Mammary epithelial cell (primary cell): ENCODE measurements at regions of chr3 and their contacts with region 1.

Region 1: DNA sequence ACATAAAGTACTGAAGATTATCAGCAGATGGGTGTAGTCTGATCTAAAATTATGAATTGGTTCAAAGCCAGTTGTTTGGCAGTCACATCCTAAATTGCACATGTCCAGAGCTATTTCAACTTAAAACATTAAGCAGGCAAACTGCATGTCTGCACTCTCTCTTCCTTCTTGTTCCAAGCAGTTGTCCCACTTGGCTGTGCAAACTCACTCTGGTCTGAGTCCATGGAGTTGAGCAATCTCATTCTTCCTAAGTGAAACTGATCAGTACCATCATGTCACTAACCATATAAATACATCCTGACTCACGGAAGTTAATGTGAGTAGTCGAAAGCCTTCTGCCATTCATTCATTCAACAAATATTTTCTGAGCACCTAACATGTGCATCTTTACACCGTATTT is 353.0 kb downstream of the ROBO1 start:
- DNase-seq: peak; percentile 41
- H3K4me3 ChIP-seq: no peak overlapping the region
- H3K27ac ChIP-seq: no peak overlapping the region
- H3K4me1 ChIP-seq: no peaks in the 10 kb centered on the region
- H3K27me3 ChIP-seq: no peaks in the 10 kb centered on the region
- CTCF ChIP-seq: no peak

Region 2: GRCh38 chr3:79490165-79491028 is 75.6 kb after region 1 on chr3:
- CTCF ChIA-PET with region 1: no interaction called
- dilution Hi-C with region 1: no loop called
- in situ Hi-C with region 1: no loop called
- intact Hi-C with region 1: loop called (anchors 5 kb)
- DNase-seq: peak; percentile 20
- H3K4me3 ChIP-seq: no peak overlapping the region
- H3K27ac ChIP-seq: no peak overlapping the region
- H3K4me1 ChIP-seq: no peaks in the 10 kb centered on the region
- H3K27me3 ChIP-seq: no peaks in the 10 kb centered on the region
- CTCF ChIP-seq: peak; percentile 4 to 10